Activated T-helper 2 cell treated with anti-CD3 and anti-CD28 coated beads, Interferon-gamma antibody, Interleukin-2, Interleukin-4, amounts not matched to agents 10 μg/mL and 5 μg/mL and 100 μg/mL, durations not matched to agents 14 hours and 24 hours and 36 hours (primary cell): ENCODE measurements at regions of chr15 and their contacts with region 1.

Region 1: GRCh38 chr15:40367686-40368611 is 9.9 kb downstream of the DISP2 start:
- DNase-seq: peak; percentile 88
- H3K4me3 Mint-ChIP-seq: peak overlapping the region; percentile 74
- H3K27ac Mint-ChIP-seq: peak overlapping the region; percentile 46
- H3K4me1 Mint-ChIP-seq: peaks cover 11% of the 10 kb centered on the region
- H3K27me3 Mint-ChIP-seq: peaks cover 23% of the 10 kb centered on the region

Region 2: GRCh38 chr15:40357723-40358470 is 10.1 kb before region 1 on chr15 and contains the start of gene DISP2:
- intact Hi-C with region 1: loop called (anchors 1 kb)
- DNase-seq: peak; percentile 82
- H3K4me3 Mint-ChIP-seq: peak within 1 kb of the TSS; percentile 75
- H3K27ac Mint-ChIP-seq: no peak within 1 kb of the TSS
- H3K4me1 Mint-ChIP-seq: peaks cover 7% of the 10 kb centered on the region
- H3K27me3 Mint-ChIP-seq: peaks cover 32% of the 10 kb centered on the region
- total RNA-seq, gene DISP2: 0.05 and 0.39 TPM in 2 replicates

Region 3: GRCh38 chr15:40382580-40383456 is 14.9 kb after region 1 on chr15 and contains the start of gene KNSTRN:
- intact Hi-C with region 1: loop called (anchors 1 kb)
- DNase-seq: peak; percentile 89
- H3K4me3 Mint-ChIP-seq: peak within 1 kb of the TSS; percentile 94
- H3K27ac Mint-ChIP-seq: peak within 1 kb of the TSS; percentile 91
- H3K4me1 Mint-ChIP-seq: peaks cover 23% of the 10 kb centered on the region
- H3K27me3 Mint-ChIP-seq: peaks cover 7% of the 10 kb centered on the region
- total RNA-seq, gene KNSTRN: 48.1 and 49.9 TPM in 2 replicates

Region 4: GRCh38 chr15:40405501-40406381 is 37.8 kb after region 1 on chr15 and contains the start of gene IVD:
- intact Hi-C with region 1: loop called (anchors 5 kb)
- DNase-seq: peak; percentile 85
- H3K4me3 Mint-ChIP-seq: peak within 1 kb of the TSS; percentile 78
- H3K27ac Mint-ChIP-seq: peak within 1 kb of the TSS; percentile 87
- H3K4me1 Mint-ChIP-seq: peaks cover 46% of the 10 kb centered on the region
- H3K27me3 Mint-ChIP-seq: no peaks in the 10 kb centered on the region
- total RNA-seq, gene IVD: 75.2 and 79.4 TPM in 2 replicates